Activated naive CD4-positive, alpha-beta T cell treated with anti-CD3 and anti-CD28 coated beads, Interleukin-2, amount 10 ng/mL, durations not matched to agents 7 days and 5 days (primary cell): ENCODE measurements at regions of chr3 and their contacts with region 1.

Region 1: DNA sequence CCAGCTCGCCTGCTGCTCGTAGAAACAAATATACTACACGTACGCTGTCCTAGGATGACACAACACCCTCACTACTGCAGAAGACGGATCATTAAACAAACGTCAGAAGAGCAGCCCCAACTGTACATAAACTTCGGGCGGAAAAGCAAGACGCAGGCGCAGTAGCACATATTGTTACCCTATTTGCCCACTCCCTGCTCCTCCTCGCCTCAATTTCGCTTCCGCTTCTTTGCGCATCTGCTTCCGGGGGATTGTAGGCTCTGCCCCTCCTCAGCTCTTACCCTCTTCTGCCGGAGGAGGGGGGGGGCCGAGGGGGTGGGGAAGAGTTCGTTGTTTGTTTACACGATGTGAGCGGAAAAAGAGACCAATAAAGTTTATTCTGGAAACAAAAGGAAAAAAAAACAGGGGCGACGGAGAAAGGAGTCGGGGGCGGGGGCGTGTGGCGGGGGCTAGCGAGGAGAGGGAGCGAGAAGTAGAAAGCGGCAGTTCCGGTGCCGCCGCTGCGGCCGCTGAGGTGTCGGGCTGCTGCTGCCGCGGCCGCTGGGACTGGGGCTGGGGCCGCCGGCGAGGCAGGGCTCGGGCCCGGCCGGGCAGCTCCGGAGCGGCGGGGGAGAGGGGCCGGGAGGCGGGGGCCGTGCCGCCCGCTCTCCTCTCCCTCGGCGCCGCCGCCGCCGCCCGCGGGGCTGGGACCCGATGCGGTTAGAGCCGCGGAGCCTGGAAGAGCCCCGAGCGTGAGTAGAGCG is at the start of gene PIK3CA:
- DNase-seq: peak; percentile 97
- H3K4me3 Mint-ChIP-seq: peak within 1 kb of the TSS; percentile 97
- H3K27ac Mint-ChIP-seq: peak within 1 kb of the TSS; percentile 98
- H3K4me1 Mint-ChIP-seq: peaks cover 38% of the 10 kb centered on the region
- H3K27me3 Mint-ChIP-seq: peaks cover 8% of the 10 kb centered on the region

Region 2: DNA sequence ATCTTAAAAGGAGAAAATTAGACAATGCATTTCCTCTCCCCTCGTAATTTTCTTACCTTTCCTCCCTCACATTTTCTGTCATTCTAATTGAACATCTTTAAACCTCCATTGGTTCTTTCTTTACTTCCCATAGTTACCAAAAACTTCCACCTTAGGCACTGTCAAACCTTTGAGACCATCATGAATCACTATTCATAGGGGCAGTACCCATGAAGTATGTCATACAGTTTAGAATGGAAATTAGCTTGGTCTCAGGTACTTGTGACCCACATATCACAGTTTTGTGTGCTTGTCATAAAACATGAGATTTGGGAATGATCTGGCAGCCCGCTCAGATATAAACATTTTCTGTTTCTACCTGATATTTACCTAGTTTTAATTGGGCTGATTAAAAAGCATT is 52.7 kb after region 1 on chr3:
- CTCF ChIA-PET with region 1: no interaction called
- DNase-seq: no peak
- H3K4me3 Mint-ChIP-seq: no peak overlapping the region
- H3K27ac Mint-ChIP-seq: no peak overlapping the region
- H3K4me1 Mint-ChIP-seq: peaks cover 18% of the 10 kb centered on the region
- H3K27me3 Mint-ChIP-seq: no peaks in the 10 kb centered on the region

Region 3: DNA sequence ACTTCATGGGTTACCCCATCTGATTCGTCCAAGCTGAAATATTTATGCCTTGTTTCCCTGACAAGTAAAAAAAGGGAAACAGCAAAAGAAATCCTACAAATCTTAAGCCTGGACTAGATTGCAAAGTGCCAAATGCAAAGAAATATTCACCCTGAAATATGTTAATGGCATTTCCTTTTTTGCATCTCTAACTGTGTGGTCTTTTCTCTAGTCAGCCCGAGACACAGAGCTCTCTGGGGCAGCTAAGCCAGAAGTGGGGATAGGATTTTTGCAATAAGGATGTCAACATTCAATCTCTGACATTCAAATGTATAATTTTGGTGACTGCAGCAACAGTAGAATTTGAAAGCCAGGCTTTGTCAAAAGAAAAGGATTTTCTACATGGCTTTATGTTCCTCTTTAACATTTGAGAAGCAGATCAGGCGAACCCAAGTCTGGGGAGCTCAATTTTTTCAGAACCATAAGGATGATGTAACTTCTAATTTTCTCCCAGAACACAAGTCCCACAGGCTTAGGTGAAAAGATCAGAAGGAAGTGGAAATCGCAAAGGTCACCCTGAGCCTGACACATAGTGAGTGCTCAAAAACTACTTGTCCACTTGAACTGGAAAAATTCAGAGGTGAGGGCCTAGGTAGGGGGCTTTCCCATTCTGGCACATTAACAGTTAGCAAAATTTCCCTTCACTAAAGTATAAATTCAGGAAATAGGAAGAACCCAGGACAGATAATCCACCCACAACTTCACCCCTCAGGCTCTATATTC is 131.1 kb after region 1 on chr3:
- CTCF ChIA-PET with region 1: no interaction called
- DNase-seq: no peak
- H3K4me3 Mint-ChIP-seq: no peak overlapping the region
- H3K27ac Mint-ChIP-seq: no peak overlapping the region
- H3K4me1 Mint-ChIP-seq: no peaks in the 10 kb centered on the region
- H3K27me3 Mint-ChIP-seq: peaks cover 5% of the 10 kb centered on the region

Region 4: GRCh38 chr3:179292450-179292849 is 144.4 kb after region 1 on chr3:
- CTCF ChIA-PET with region 1: no interaction called
- DNase-seq: no peak
- H3K4me3 Mint-ChIP-seq: no peak overlapping the region
- H3K27ac Mint-ChIP-seq: no peak overlapping the region
- H3K4me1 Mint-ChIP-seq: no peaks in the 10 kb centered on the region
- H3K27me3 Mint-ChIP-seq: peaks cover 13% of the 10 kb centered on the region

Region 5: GRCh38 chr3:179322286-179323196 is 174.5 kb after region 1 on chr3 and contains the start of gene ZNF639:
- CTCF ChIA-PET with region 1: interaction called, 19 read pairs
- DNase-seq: peak; percentile 87
- H3K4me3 Mint-ChIP-seq: peak within 1 kb of the TSS; percentile 85
- H3K27ac Mint-ChIP-seq: peak within 1 kb of the TSS; percentile 94
- H3K4me1 Mint-ChIP-seq: peaks cover 35% of the 10 kb centered on the region
- H3K27me3 Mint-ChIP-seq: peaks cover 15% of the 10 kb centered on the region